PC-9 (cell line): ENCODE measurements at regions of chr16 and their contacts with region 1.

Region 1: GRCh38 chr16:56519459-56520250 is at the start of gene BBS2:
- DNase-seq: peak; percentile 75 to 90
- H3K4me3 ChIP-seq: peak within 1 kb of the TSS; percentile 81
- H3K27ac ChIP-seq: peak within 1 kb of the TSS; percentile 52; the same call in 1 of the 2 replicates
- H3K4me1 ChIP-seq: peaks cover 30% of the 10 kb centered on the region
- H3K27me3 ChIP-seq: no peaks in the 10 kb centered on the region
- CTCF ChIP-seq: no peak
- total RNA-seq, gene BBS2: 56.3 and 77.8 TPM in 2 replicates

Region 2: GRCh38 chr16:56436258-56436657 is 83.4 kb before region 1 on chr16:
- CTCF ChIA-PET with region 1: no interaction called
- POLR2A ChIA-PET with region 1: no interaction called
- intact Hi-C with region 1: no loop called
- DNase-seq: no peak
- H3K4me3 ChIP-seq: no peak overlapping the region
- H3K27ac ChIP-seq: no peak overlapping the region
- H3K4me1 ChIP-seq: no peaks in the 10 kb centered on the region
- H3K27me3 ChIP-seq: no peaks in the 10 kb centered on the region
- CTCF ChIP-seq: no peak

Region 3: DNA sequence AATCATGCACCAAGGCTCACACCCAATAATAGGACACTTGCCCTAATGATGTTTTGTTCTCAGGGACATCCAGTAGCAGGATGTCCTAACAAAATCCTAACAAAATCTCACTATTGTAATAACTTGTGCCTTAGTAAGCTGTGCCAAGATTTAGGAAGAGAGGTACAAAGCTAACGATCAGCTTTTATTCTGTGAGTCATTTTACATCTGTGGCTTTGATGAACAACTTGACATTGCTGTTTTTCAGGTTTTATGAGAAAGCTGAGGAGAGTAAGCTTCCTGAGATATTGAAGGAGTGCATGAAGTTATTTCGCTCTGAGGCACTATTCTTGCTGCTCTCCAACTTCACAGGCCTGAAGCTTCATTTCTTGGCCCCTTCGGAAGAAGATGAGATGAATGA is 49.4 kb before region 1 on chr16:
- CTCF ChIA-PET with region 1: no interaction called
- POLR2A ChIA-PET with region 1: no interaction called
- intact Hi-C with region 1: loop called (anchors 1 kb)
- DNase-seq: peak in 1 of 2 experiments; percentile 92
- H3K4me3 ChIP-seq: no peak overlapping the region
- H3K27ac ChIP-seq: peak overlapping the region; percentile 65
- H3K4me1 ChIP-seq: peaks cover 26% of the 10 kb centered on the region
- H3K27me3 ChIP-seq: no peaks in the 10 kb centered on the region
- CTCF ChIP-seq: no peak

Region 4: DNA sequence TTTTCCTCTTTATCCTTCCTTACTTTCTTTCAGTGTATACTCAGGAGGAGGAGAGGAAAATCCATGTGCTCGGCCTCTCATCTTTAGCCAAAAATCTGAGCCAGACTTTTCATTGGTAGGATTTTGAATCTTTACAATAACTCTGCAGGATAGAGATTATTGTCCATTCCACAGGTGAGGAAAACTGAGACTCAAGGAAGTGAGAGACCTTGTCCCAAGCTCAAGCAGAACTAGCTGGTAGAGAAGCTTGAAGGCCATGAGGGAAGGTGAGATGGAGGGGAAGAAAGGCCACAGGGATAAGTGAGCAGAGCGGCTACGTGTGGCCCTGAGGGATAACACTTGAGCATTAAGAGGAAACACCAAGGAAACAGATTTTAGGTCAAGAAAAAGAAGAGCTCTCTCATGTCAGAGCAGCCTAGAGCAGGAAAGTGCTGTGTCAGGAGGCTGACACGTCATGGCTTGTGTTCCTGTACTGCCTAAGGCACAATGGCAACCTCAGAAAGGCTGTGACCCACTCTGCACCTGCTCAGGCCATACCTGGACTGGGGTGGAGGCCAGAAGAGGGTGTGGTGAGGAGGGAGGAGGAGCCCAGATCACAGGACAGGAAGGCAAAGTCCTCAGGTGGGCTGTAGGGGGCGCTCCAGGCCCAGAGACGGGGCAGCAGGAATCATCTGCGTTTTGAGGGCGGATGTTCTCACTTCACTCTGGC is 57.1 kb after region 1 on chr16:
- CTCF ChIA-PET with region 1: interaction called, 8 read pairs
- POLR2A ChIA-PET with region 1: no interaction called
- intact Hi-C with region 1: loop called (anchors 10 kb)
- DNase-seq: peak; percentile 92 to 95
- H3K4me3 ChIP-seq: no peak overlapping the region
- H3K27ac ChIP-seq: peak overlapping the region; percentile 75
- H3K4me1 ChIP-seq: peaks cover 14% of the 10 kb centered on the region
- H3K27me3 ChIP-seq: no peaks in the 10 kb centered on the region
- CTCF ChIP-seq: peak; percentile 91